WTC11 (cell line): ENCODE measurements at regions of chr4 and their contacts with region 1.

Region 1: DNA sequence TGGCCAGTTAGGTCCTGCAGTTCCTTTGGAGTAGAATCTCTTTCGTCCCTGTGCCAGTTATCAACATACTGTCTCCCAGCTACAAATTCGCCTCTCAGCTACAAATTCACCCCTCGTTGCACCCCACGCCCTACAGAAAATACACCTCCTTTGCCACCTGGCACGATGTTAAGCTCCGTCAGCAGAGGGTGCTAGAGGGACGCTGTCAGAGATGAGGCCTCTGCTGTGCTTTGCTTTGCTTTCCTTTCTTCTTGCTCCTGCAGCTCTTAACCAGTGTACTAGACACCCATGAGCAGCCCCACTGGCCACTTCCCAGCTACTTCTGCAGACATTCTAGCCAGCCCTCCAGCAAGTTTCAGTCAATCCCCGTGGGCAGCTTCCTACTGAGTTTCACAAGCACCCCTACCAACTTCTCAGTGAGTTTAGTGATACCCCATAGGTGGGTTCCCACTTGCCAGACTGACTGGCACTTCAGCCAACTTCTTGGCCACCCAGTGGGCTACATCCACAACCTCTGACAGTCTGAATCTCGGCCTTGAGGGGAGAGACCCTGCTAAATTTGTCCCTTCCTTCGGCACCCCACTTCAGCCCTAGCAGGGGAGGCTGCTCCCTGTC is 21.8 kb downstream of the HAUS3 start:
- DNase-seq: peak; percentile 86
- ATAC-seq: peak; percentile 67
- H3K4me3 Mint-ChIP-seq: no peak overlapping the region
- H3K27ac Mint-ChIP-seq: no peak overlapping the region
- H3K4me1 Mint-ChIP-seq: peaks cover 47% of the 10 kb centered on the region
- H3K27me3 Mint-ChIP-seq: peaks cover 87% of the 10 kb centered on the region
- CTCF ChIP-seq: peak; percentile 78

Region 2: GRCh38 chr4:2241410-2242353 is 21.6 kb after region 1 on chr4 and contains the starts of genes HAUS3 and POLN:
- CTCF ChIA-PET with region 1: interaction called, 32 read pairs
- POLR2A ChIA-PET with region 1: interaction called, 5 read pairs
- DNase-seq: peak; percentile 99
- ATAC-seq: peak; percentile 98
- H3K4me3 Mint-ChIP-seq: peak within 1 kb of the TSS; percentile 82
- H3K27ac Mint-ChIP-seq: 0 out of 2 replicates have a peak within 1 kb of the TSS, but pooled peaks have one; percentile 35
- H3K4me1 Mint-ChIP-seq: peaks cover 31% of the 10 kb centered on the region
- H3K27me3 Mint-ChIP-seq: peaks cover 13% of the 10 kb centered on the region
- CTCF ChIP-seq: no peak
- total RNA-seq, gene HAUS3: 11.9 to 14.7 TPM (median 12.4 TPM) in 3 replicates
- total RNA-seq, gene POLN: 2.5 to 3.5 TPM (median 2.8 TPM) in 3 replicates

Region 3: DNA sequence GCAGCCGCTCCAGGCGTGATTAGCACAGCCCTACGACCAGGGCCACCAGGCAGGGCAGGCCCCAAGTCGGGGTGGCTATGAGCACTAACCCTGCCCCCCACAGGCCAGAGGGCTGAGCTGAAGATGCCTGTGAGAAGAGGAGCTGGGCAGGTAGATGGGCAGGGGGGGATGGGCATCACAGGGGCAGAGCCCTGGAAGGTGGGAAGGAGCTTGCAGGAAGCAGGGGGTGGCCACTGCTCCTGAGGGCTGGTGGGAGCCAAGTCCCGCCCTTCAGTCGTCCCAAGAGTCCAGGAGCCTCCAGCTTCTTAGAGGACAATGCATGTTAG is 49.0 kb after region 1 on chr4:
- CTCF ChIA-PET with region 1: interaction called, 12 read pairs
- POLR2A ChIA-PET with region 1: no interaction called
- DNase-seq: peak; percentile 35
- ATAC-seq: peak; percentile 69
- H3K4me3 Mint-ChIP-seq: no peak overlapping the region
- H3K27ac Mint-ChIP-seq: no peak overlapping the region
- H3K4me1 Mint-ChIP-seq: peaks cover 9% of the 10 kb centered on the region
- H3K27me3 Mint-ChIP-seq: no peaks in the 10 kb centered on the region
- CTCF ChIP-seq: no peak

Region 4: GRCh38 chr4:2363056-2363721 is 143.1 kb after region 1 on chr4:
- CTCF ChIA-PET with region 1: interaction called, 15 read pairs
- POLR2A ChIA-PET with region 1: no interaction called
- DNase-seq: no peak
- ATAC-seq: no peak
- H3K4me3 Mint-ChIP-seq: no peak overlapping the region
- H3K27ac Mint-ChIP-seq: peak overlapping the region; percentile 65; the same call in 1 of the 2 replicates
- H3K4me1 Mint-ChIP-seq: no peaks in the 10 kb centered on the region; the same call in 1 of the 2 replicates
- H3K27me3 Mint-ChIP-seq: no peaks in the 10 kb centered on the region
- CTCF ChIP-seq: no peak

Region 5: DNA sequence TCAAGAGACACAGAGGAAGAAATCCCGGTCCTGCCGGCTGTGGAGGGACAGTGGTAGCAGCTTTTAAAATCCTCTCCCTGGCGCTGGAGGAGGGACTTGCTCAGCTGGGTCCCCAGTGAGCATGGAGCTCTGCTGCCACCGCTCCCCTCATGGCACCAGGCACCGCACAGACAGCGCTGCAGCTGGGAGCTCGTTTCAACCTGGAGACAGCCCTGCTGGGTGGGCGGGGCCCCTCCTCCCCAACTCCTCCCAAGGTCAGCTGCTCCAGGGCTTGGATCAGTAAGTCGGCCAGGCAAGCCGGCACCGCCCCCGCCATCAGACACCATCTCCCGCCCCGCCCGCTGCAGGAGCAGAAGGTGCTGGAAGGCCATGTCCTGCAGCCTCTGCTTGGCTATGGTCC is 181.9 kb after region 1 on chr4:
- CTCF ChIA-PET with region 1: interaction called, 11 read pairs
- POLR2A ChIA-PET with region 1: interaction called, 4 read pairs
- DNase-seq: peak; percentile 88
- ATAC-seq: peak; percentile 92
- H3K4me3 Mint-ChIP-seq: peak overlapping the region; percentile 67
- H3K27ac Mint-ChIP-seq: 0 out of 2 replicates have a peak overlapping the region, but pooled peaks have one; percentile 23
- H3K4me1 Mint-ChIP-seq: peaks cover 30% of the 10 kb centered on the region
- H3K27me3 Mint-ChIP-seq: peaks cover 9% of the 10 kb centered on the region
- CTCF ChIP-seq: no peak

Region 6: DNA sequence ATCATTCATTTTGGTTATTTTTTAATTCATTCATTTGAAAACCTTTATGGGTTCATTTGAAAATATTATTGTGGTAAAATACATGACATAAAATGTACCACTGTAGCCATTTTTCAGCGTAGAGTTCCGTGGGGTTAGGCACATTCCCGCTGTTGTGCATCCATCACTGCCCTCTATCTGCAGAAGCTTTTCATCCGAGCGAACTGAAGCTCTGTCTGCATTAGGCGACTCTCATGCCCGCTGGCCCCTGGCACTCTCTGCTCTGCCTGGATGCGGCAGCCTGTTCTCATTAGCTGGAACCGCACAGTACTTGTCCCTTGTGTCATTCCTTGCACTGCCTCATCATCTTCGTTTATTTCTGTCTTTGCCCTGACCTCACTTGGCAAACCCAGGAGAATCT is 216.2 kb after region 1 on chr4:
- CTCF ChIA-PET with region 1: interaction called, 44 read pairs
- POLR2A ChIA-PET with region 1: no interaction called
- DNase-seq: no peak
- ATAC-seq: peak; percentile 30; the same call in 1 of the 2 replicates
- H3K4me3 Mint-ChIP-seq: no peak overlapping the region
- H3K27ac Mint-ChIP-seq: no peak overlapping the region
- H3K4me1 Mint-ChIP-seq: no peaks in the 10 kb centered on the region
- H3K27me3 Mint-ChIP-seq: no peaks in the 10 kb centered on the region
- CTCF ChIP-seq: no peak